ENCODE measurements at regions of chr4 and their contacts with region 1.

Region 1: GRCh38 chr4:101419324-101420135 is 72.2 kb upstream of the PPP3CA start:
- DNase-seq: no peak
- H3K4me3 Mint-ChIP-seq: no peak overlapping the region
- H3K27ac Mint-ChIP-seq: no peak overlapping the region
- H3K4me1 Mint-ChIP-seq: peaks cover 35% of the 10 kb centered on the region
- H3K27me3 Mint-ChIP-seq: peaks cover 38% of the 10 kb centered on the region

Region 2: GRCh38 chr4:100823066-100823992 is 596.2 kb before region 1 on chr4:
- CTCF ChIA-PET with region 1: no interaction called
- POLR2A ChIA-PET with region 1: no interaction called
- intact Hi-C with region 1: loop called (anchors 2 kb)
- DNase-seq: peak; percentile 57
- H3K4me3 Mint-ChIP-seq: no peak overlapping the region
- H3K27ac Mint-ChIP-seq: peak overlapping the region; percentile 88
- H3K4me1 Mint-ChIP-seq: peaks cover 15% of the 10 kb centered on the region
- H3K27me3 Mint-ChIP-seq: no peaks in the 10 kb centered on the region

Region 3: GRCh38 chr4:101103381-101104142 is 316.0 kb before region 1 on chr4:
- CTCF ChIA-PET with region 1: no interaction called
- POLR2A ChIA-PET with region 1: no interaction called
- intact Hi-C with region 1: loop called (anchors 5 kb)
- DNase-seq: no peak
- H3K4me3 Mint-ChIP-seq: no peak overlapping the region
- H3K27ac Mint-ChIP-seq: peak overlapping the region; percentile 42
- H3K4me1 Mint-ChIP-seq: peaks cover 19% of the 10 kb centered on the region
- H3K27me3 Mint-ChIP-seq: no peaks in the 10 kb centered on the region

Region 4: GRCh38 chr4:101282076-101282844 is 137.3 kb before region 1 on chr4:
- CTCF ChIA-PET with region 1: no interaction called
- POLR2A ChIA-PET with region 1: no interaction called
- intact Hi-C with region 1: loop called (anchors 1 kb)
- DNase-seq: peak; percentile 67
- H3K4me3 Mint-ChIP-seq: no peak overlapping the region
- H3K27ac Mint-ChIP-seq: no peak overlapping the region
- H3K4me1 Mint-ChIP-seq: peaks cover 58% of the 10 kb centered on the region
- H3K27me3 Mint-ChIP-seq: no peaks in the 10 kb centered on the region

Region 5: DNA sequence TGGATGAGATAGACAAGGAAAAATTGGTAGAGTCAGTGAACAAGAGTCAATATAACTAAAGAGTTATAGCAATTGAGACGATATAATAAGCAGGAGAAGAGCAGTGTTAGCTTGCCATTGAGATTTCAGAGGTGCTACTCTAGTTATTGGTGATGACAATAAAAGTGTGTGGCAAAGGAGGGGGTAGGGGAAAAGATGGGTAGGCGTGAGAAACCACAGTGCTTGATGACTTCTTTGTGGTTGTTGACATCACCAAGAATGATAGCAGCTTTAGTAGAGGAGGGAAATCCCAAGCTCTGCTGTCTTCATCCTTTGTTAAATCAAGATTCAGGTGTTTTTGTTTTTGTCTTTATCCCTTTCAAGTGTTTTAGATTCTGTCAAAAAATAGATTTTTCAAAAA is 107.7 kb after region 1 on chr4:
- CTCF ChIA-PET with region 1: interaction called, 4 read pairs
- POLR2A ChIA-PET with region 1: interaction called, 3 read pairs
- intact Hi-C with region 1: loop called (anchors 1 kb)
- DNase-seq: peak; percentile 87
- H3K4me3 Mint-ChIP-seq: peak overlapping the region; percentile 12
- H3K27ac Mint-ChIP-seq: peak overlapping the region; percentile 30
- H3K4me1 Mint-ChIP-seq: peaks cover 20% of the 10 kb centered on the region
- H3K27me3 Mint-ChIP-seq: peaks cover 38% of the 10 kb centered on the region